MCF 10A (cell line): ENCODE measurements at regions of chr11 and their contacts with region 1.

Region 1: DNA sequence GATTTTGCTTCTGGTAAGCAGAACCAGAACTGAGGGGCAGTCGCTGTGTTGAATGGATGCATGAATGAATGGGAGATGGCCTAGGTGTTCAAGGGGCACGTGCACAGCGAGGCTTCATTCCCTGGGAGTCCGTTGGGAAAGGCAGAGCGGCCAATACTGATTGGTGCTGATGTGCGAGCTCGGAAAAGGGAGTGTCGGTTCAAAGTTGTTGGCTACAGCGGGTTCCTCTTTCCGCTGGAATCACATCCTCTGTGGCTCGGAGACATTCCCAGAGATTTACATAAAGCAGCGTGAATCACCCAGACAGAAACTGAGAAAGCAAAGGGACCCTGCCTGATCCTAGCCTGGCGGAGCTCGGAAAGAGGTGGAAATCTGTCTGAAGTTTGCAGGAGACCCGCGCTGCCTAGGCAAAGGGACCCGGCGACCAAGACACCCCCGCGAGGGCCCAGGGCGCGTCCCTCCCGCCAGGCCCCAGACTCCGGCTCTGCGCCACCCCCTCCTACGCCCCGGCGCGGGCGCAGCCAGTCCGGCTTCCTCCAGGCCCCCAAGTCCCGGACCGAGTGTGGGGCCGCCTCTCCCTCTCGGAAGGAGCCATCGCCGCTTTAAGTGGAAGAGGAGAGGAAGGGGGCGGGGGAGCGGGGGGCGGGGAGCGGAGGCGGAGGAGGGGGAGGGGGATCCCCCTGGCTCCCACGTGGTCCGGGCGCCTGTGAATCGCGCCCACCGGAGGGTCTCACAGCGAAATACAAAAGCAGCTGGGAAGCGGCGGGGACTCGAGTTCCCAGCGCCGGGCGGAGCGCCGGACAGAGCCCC is at the start of gene FJX1:
- DNase-seq: peak; percentile 87
- H3K4me3 Mint-ChIP-seq: peak within 1 kb of the TSS; percentile 82
- H3K27ac Mint-ChIP-seq: no peak within 1 kb of the TSS
- H3K4me1 Mint-ChIP-seq: peaks cover 28% of the 10 kb centered on the region
- H3K27me3 Mint-ChIP-seq: no peaks in the 10 kb centered on the region
- CTCF ChIP-seq: no peak
- total RNA-seq, gene FJX1: 33.3 and 53.7 TPM in 2 replicates

Region 2: DNA sequence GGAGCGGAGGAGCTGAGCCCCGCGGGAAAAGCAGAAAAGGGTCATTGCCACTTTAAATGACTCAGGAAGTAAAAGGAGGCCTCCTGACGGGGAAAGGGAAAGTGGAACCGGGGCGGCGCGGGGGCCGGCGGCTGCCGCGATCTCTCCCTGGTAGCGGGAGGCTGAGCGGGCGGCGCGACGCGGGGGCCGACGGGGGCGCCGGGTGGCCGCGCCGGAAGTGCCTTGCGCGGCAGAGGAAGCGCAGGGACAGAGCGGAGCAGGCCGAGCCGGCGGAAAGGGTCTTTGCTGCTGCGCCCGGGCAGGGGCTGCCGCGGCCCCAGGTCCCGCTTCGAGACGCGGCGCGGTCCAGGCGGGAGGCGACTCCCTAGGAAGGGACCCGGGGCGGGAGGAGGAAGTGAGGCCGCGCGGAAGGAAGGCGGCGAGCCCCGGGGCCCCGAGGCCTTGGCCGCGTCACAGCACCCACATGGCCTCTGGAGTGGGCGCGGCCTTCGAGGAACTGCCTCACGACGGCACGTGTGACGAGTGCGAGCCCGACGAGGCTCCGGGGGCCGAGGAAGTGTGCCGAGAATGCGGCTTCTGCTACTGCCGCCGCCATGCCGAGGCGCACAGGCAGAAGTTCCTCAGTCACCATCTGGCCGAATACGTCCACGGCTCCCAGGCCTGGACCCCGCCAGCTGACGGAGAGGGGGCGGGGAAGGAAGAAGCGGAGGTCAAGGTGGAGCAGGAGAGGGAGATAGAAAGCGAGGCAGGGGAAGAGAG is 44.9 kb after region 1 on chr11 and contains the start of gene TRIM44:
- CTCF ChIA-PET with region 1: interaction called, 3 read pairs
- POLR2A ChIA-PET with region 1: interaction called, 69 read pairs
- intact Hi-C with region 1: loop called (anchors 1 kb)
- DNase-seq: peak; percentile 84
- H3K4me3 Mint-ChIP-seq: peak within 1 kb of the TSS; percentile 100
- H3K27ac Mint-ChIP-seq: peak within 1 kb of the TSS; percentile 100
- H3K4me1 Mint-ChIP-seq: peaks cover 25% of the 10 kb centered on the region
- H3K27me3 Mint-ChIP-seq: no peaks in the 10 kb centered on the region
- CTCF ChIP-seq: no peak
- total RNA-seq, gene TRIM44: 98.5 and 103 TPM in 2 replicates

Region 3: GRCh38 chr11:35927730-35928129 is 309.8 kb after region 1 on chr11:
- CTCF ChIA-PET with region 1: interaction called, 4 read pairs
- POLR2A ChIA-PET with region 1: interaction called, 5 read pairs
- intact Hi-C with region 1: loop called (anchors 5 kb)
- DNase-seq: peak; percentile 99
- H3K4me3 Mint-ChIP-seq: peak overlapping the region; percentile 29
- H3K27ac Mint-ChIP-seq: peak overlapping the region; percentile 91
- H3K4me1 Mint-ChIP-seq: peaks cover 18% of the 10 kb centered on the region
- H3K27me3 Mint-ChIP-seq: no peaks in the 10 kb centered on the region
- CTCF ChIP-seq: no peak

Region 4: GRCh38 chr11:36056160-36056751 is 438.4 kb after region 1 on chr11:
- CTCF ChIA-PET with region 1: interaction called, 3 read pairs
- POLR2A ChIA-PET with region 1: no interaction called
- intact Hi-C with region 1: loop called (anchors 5 kb)
- DNase-seq: peak; percentile 61
- H3K4me3 Mint-ChIP-seq: no peak overlapping the region
- H3K27ac Mint-ChIP-seq: no peak overlapping the region
- H3K4me1 Mint-ChIP-seq: peaks cover 8% of the 10 kb centered on the region
- H3K27me3 Mint-ChIP-seq: no peaks in the 10 kb centered on the region
- CTCF ChIP-seq: peak; percentile 49

Region 5: DNA sequence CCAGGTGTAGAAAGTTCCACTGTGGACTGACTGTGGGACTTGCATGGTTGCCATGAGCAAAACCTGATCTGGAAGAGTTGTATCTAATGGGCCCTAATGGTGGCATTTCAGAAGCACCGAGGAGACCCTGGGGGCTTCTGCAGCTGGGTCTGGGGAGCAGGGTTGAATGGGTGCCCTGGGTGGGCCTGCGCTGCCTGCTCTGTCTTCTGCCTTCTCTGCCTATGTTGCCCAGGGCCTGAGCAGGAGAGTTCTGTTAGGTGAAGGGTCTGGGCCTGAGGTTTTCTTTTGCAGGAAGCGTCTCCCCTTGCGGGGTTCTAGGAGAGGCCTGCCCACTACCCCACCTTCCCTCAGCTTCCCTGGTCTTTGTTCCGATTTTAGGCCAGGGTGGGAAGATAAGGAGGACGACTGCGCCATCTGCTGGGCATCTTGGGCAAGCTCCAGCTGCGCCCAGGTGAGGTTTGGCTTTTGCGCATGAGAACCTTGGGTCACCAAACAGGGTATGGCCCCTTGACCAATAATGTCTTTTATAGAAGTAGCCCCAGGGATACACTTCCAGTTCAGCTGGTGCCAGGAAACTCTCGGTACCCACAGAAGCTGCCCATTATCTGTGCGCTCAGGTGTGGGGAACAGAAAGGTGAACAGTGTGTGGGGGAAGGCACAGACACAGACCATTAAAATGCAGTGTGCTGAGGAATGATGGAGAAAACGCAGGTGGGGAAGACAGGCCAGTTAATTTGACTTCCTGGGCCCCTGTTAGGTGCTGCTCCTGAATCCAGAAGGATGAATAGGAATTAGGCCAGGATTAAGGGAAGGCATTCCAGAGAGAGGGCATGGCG is 648.1 kb after region 1 on chr11:
- CTCF ChIA-PET with region 1: interaction called, 30 read pairs
- POLR2A ChIA-PET with region 1: interaction called, 11 read pairs
- intact Hi-C with region 1: loop called (anchors 1 kb)
- DNase-seq: peak; percentile 68
- H3K4me3 Mint-ChIP-seq: no peak overlapping the region
- H3K27ac Mint-ChIP-seq: no peak overlapping the region
- H3K4me1 Mint-ChIP-seq: no peaks in the 10 kb centered on the region
- H3K27me3 Mint-ChIP-seq: no peaks in the 10 kb centered on the region
- CTCF ChIP-seq: peak; percentile 92